CD8-positive, alpha-beta memory T cell (primary cell): ENCODE measurements at regions of chr5 and their contacts with region 1.

Region 1: DNA sequence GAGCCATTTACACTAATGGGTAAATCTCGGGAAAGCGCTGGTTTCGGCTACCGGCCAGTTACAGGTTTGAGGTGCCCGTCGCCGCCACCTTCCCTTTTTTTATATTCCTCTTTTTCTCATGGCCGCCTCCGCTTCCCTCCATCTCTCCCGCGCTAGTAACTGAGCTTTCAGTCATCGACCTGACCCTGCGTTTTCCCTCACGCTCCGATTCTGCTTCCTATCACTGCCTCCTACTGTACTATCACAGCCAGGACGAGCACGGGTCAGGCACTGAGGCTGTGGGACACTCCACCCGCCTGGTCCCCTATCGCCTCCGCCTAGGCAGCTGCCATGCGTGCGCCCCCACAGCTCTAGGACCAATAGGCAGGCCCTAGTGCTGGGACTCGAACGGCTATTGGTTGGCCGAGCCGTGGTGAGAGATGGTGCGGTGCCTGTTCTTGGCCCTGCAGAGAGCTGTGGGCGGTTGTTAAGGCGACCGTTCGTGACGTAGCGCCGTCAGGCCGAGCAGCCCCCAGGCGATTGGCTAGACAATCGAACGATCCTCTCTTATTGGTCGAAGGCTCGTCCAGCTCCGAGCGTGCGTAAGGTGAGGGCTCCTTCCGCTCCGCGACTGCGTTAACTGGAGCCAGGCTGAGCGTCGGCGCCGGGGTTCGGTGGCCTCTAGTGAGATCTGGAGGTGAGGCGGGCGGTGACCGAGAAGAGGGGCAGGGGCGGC is at the start of gene HMGCR:
- DNase-seq: peak; percentile 94 to 99 (median 97)
- H3K4me3 ChIP-seq: peak within 1 kb of the TSS; percentile 91
- H3K4me3 Mint-ChIP-seq: no peak within 1 kb of the TSS
- H3K27ac ChIP-seq: peak within 1 kb of the TSS; percentile 90
- H3K27ac Mint-ChIP-seq: peak within 1 kb of the TSS in 1 of 8 donors; percentile 96
- H3K4me1 ChIP-seq: peaks cover 19% of the 10 kb centered on the region
- H3K4me1 Mint-ChIP-seq: peaks cover 28 to 41% (median 38%) of the 10 kb centered on the region in 3 donors
- H3K27me3 ChIP-seq: no peaks in the 10 kb centered on the region
- H3K27me3 Mint-ChIP-seq: no peaks in the 10 kb centered on the region
- total RNA-seq, gene HMGCR: 45.9 to 47.7 TPM

Region 2: GRCh38 chr5:75511435-75512384 is 174.9 kb after region 1 on chr5 and contains the starts of genes CERT1 and POLK:
- CTCF ChIA-PET with region 1: no interaction called
- POLR2A ChIA-PET with region 1: interaction called, 10 read pairs
- DNase-seq: peak; percentile 86 to 95 (median 90)
- H3K4me3 ChIP-seq: peak within 1 kb of the TSS; percentile 83
- H3K4me3 Mint-ChIP-seq: peak within 1 kb of the TSS; percentile 86 to 97 (median 95)
- H3K27ac ChIP-seq: peak within 1 kb of the TSS; percentile 79
- H3K27ac Mint-ChIP-seq: peak within 1 kb of the TSS; percentile 92 to 98 (median 96)
- H3K4me1 ChIP-seq: peaks cover 43% of the 10 kb centered on the region
- H3K4me1 Mint-ChIP-seq: peaks cover 52 to 73% (median 71%) of the 10 kb centered on the region in 3 donors
- H3K27me3 ChIP-seq: no peaks in the 10 kb centered on the region
- H3K27me3 Mint-ChIP-seq: no peaks in the 10 kb centered on the region
- total RNA-seq, gene CERT1: 35.0 to 35.4 TPM
- total RNA-seq, gene POLK: 35.9 to 36.9 TPM

Region 3: GRCh38 chr5:75574791-75575190 is 238.0 kb after region 1 on chr5:
- CTCF ChIA-PET with region 1: no interaction called
- POLR2A ChIA-PET with region 1: no interaction called
- DNase-seq: no peak
- H3K4me3 ChIP-seq: no peak overlapping the region
- H3K4me3 Mint-ChIP-seq: no peak overlapping the region
- H3K27ac ChIP-seq: no peak overlapping the region
- H3K27ac Mint-ChIP-seq: no peak overlapping the region
- H3K4me1 ChIP-seq: no peaks in the 10 kb centered on the region
- H3K4me1 Mint-ChIP-seq: peaks cover 0 to 2% (median 0%) of the 10 kb centered on the region in 3 donors
- H3K27me3 ChIP-seq: no peaks in the 10 kb centered on the region
- H3K27me3 Mint-ChIP-seq: no peaks in the 10 kb centered on the region